GM12878 (cell line): ENCODE measurements at regions of chr2 and their contacts with region 1.

Region 1: GRCh38 chr2:136059036-136059472 is 58.9 kb downstream of the CXCR4 start:
- DNase-seq: peak; percentile 63
- ATAC-seq: peak; percentile 63
- H3K4me3 ChIP-seq: no peak overlapping the region
- H3K27ac ChIP-seq: peak overlapping the region; percentile 40; the same call in 1 of the 2 replicates
- H3K4me1 ChIP-seq: peaks cover 51% of the 10 kb centered on the region
- H3K27me3 ChIP-seq: no peaks in the 10 kb centered on the region
- CTCF ChIP-seq: no peak
- EP300 ChIP-seq: peak in 1 of 2 experiments; percentile 45; a peak in 1 of 4 replicates
- POLR2A ChIP-seq: no peak
- RAD21 ChIP-seq: peak; percentile 15; the same call in 1 of the 2 replicates

Region 2: DNA sequence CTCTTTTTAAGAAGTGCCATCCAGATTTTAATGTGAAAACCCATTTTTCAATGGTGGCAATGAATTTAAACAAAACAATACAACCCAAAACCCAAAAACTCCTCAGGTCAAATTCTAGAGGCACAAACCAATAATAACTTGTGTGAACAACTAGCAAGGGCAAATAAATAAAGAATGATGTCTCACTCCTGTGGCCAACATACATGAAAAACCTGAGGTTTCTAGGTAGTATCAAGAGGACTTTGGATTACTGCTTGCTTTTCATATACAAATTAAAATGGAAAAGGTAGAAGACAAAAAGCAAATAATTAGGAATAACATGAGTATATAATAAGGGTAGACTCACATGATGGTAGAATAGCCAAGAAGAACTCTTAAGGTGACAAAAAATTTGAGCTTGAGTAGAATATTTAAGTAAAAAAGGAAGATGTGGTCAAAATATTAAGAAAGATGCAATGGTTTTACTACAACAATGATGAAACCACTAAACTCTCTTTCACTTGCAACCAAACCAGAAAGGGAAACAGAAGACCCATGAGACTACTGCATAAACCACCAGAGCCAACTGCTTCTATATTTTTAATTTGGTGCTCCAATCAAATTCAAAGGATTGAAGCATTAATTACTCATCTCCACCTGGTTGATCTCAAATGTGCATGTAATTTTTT is 127.1 kb before region 1 on chr2:
- CTCF ChIA-PET with region 1: interaction called, 5 read pairs
- POLR2A ChIA-PET with region 1: interaction called, 3 read pairs
- RAD21 ChIA-PET with region 1: interaction called, 12 read pairs
- SMC1A ChIA-PET with region 1: interaction called, 14 read pairs
- in situ Hi-C with region 1: no loop called
- intact Hi-C with region 1: no loop called
- DNase-seq: no peak
- ATAC-seq: peak; percentile 95
- H3K4me3 ChIP-seq: no peak overlapping the region
- H3K27ac ChIP-seq: no peak overlapping the region
- H3K4me1 ChIP-seq: peaks cover 6% of the 10 kb centered on the region
- H3K27me3 ChIP-seq: no peaks in the 10 kb centered on the region
- CTCF ChIP-seq: no peak
- EP300 ChIP-seq: peak; percentile 45 to 53; a peak in 2 of 4 replicates
- POLR2A ChIP-seq: no peak
- RAD21 ChIP-seq: no peak

Region 3: DNA sequence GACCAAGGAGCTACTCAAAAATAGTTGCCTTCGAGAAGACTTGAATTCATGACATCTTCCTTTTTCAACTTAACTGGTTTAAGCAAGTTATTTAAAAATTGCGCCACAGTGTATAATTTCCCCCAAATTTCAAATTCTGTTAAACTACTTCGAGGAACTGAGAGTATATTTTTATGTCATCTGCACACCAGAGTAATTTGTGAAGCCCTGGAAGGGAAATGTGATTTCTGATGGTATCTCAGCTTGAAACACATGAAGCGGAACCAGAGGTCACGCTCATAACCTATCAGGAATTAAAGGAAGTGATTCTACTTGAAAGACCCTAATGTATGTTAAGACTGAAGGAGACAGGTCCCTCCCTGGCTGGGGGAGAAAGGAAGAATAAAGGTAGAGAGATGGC is 39.7 kb before region 1 on chr2:
- CTCF ChIA-PET with region 1: interaction called, 33 read pairs
- POLR2A ChIA-PET with region 1: interaction called, 80 read pairs
- RAD21 ChIA-PET with region 1: interaction called, 348 read pairs
- SMC1A ChIA-PET with region 1: interaction called, 961 read pairs
- in situ Hi-C with region 1: no loop called
- intact Hi-C with region 1: no loop called
- DNase-seq: peak; percentile 40
- ATAC-seq: peak; percentile 78
- H3K4me3 ChIP-seq: no peak overlapping the region
- H3K27ac ChIP-seq: no peak overlapping the region
- H3K4me1 ChIP-seq: peaks cover 8% of the 10 kb centered on the region
- H3K27me3 ChIP-seq: no peaks in the 10 kb centered on the region
- CTCF ChIP-seq: no peak
- EP300 ChIP-seq: peak; percentile 78 to 87; a peak in 2 of 4 replicates
- POLR2A ChIP-seq: no peak
- RAD21 ChIP-seq: 0 out of 2 replicates have a peak, but pooled peaks have one; percentile 6

Region 4: DNA sequence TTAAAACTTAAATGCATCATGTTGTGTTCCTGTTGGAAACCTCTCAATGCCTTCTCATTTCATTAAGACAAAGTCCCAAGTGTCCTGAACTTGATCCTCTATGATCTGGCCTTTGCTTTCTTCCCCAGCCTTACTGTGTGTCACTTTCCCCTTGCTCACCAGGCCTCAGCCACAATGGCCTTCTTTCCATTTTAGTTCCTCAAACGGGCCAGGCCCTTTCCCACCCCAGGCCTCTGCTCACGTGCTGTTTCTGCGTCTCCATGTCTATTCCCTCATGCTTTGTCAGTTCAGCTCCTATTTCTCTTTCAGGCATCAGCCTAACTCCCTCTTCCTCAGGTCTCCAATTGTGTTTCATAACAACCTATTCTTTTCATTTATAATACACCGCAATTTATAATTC is 39.4 kb after region 1 on chr2:
- CTCF ChIA-PET with region 1: interaction called, 3 read pairs
- POLR2A ChIA-PET with region 1: interaction called, 3 read pairs
- RAD21 ChIA-PET with region 1: interaction called, 3 read pairs
- SMC1A ChIA-PET with region 1: interaction called, 20 read pairs
- in situ Hi-C with region 1: no loop called
- intact Hi-C with region 1: no loop called
- DNase-seq: no peak
- ATAC-seq: no peak
- H3K4me3 ChIP-seq: no peak overlapping the region
- H3K27ac ChIP-seq: no peak overlapping the region
- H3K4me1 ChIP-seq: no peaks in the 10 kb centered on the region
- H3K27me3 ChIP-seq: no peaks in the 10 kb centered on the region
- CTCF ChIP-seq: no peak
- EP300 ChIP-seq: no peak
- POLR2A ChIP-seq: no peak
- RAD21 ChIP-seq: no peak

Region 5: GRCh38 chr2:136135921-136136906 is 77.2 kb after region 1 on chr2:
- CTCF ChIA-PET with region 1: interaction called, 6 read pairs
- POLR2A ChIA-PET with region 1: interaction called, 9 read pairs
- RAD21 ChIA-PET with region 1: interaction called, 301 read pairs
- SMC1A ChIA-PET with region 1: interaction called, 234 read pairs
- in situ Hi-C with region 1: no loop called
- intact Hi-C with region 1: loop called (anchors 1 kb)
- DNase-seq: no peak
- ATAC-seq: peak; percentile 64
- H3K4me3 ChIP-seq: no peak overlapping the region
- H3K27ac ChIP-seq: no peak overlapping the region
- H3K4me1 ChIP-seq: peaks cover 42% of the 10 kb centered on the region
- H3K27me3 ChIP-seq: peaks cover 0 to 21% of the 10 kb centered on the region in 2 experiments; a peak in 2 of 4 replicates
- CTCF ChIP-seq: no peak
- EP300 ChIP-seq: peak; percentile 97; a peak in 3 of 4 replicates
- POLR2A ChIP-seq: no peak
- RAD21 ChIP-seq: no peak

Region 6: GRCh38 chr2:136151021-136151971 is 92.2 kb after region 1 on chr2:
- CTCF ChIA-PET with region 1: no interaction called
- POLR2A ChIA-PET with region 1: no interaction called
- RAD21 ChIA-PET with region 1: no interaction called
- SMC1A ChIA-PET with region 1: no interaction called
- in situ Hi-C with region 1: no loop called
- intact Hi-C with region 1: no loop called
- DNase-seq: no peak
- ATAC-seq: peak; percentile 68
- H3K4me3 ChIP-seq: no peak overlapping the region
- H3K27ac ChIP-seq: no peak overlapping the region
- H3K4me1 ChIP-seq: no peaks in the 10 kb centered on the region
- H3K27me3 ChIP-seq: peaks cover 0 to 2% of the 10 kb centered on the region in 2 experiments; a peak in 3 of 4 replicates
- CTCF ChIP-seq: no peak
- EP300 ChIP-seq: no peak
- POLR2A ChIP-seq: no peak
- RAD21 ChIP-seq: no peak

Region 7: GRCh38 chr2:136246086-136246669 is 187.1 kb after region 1 on chr2:
- CTCF ChIA-PET with region 1: no interaction called
- POLR2A ChIA-PET with region 1: no interaction called
- RAD21 ChIA-PET with region 1: interaction called, 57 read pairs
- SMC1A ChIA-PET with region 1: interaction called, 4 read pairs
- in situ Hi-C with region 1: no loop called
- intact Hi-C with region 1: loop called (anchors 10 kb)
- DNase-seq: peak; percentile 60
- ATAC-seq: peak; percentile 96
- H3K4me3 ChIP-seq: no peak overlapping the region
- H3K27ac ChIP-seq: no peak overlapping the region; the same call in 1 of the 2 replicates
- H3K4me1 ChIP-seq: peaks cover 3% of the 10 kb centered on the region; the same call in 1 of the 2 replicates
- H3K27me3 ChIP-seq: 0 out of 4 replicates have a peak, but pooled peaks cover 0 to 2% of the 10 kb centered on the region in 2 experiments
- CTCF ChIP-seq: no peak
- EP300 ChIP-seq: peak; percentile 78 to 87; a peak in 3 of 4 replicates
- POLR2A ChIP-seq: no peak
- RAD21 ChIP-seq: no peak

Region 8: GRCh38 chr2:136384531-136385303 is 325.7 kb after region 1 on chr2:
- CTCF ChIA-PET with region 1: interaction called, 12 read pairs
- POLR2A ChIA-PET with region 1: interaction called, 5 read pairs
- RAD21 ChIA-PET with region 1: interaction called, 244 read pairs
- SMC1A ChIA-PET with region 1: interaction called, 272 read pairs
- in situ Hi-C with region 1: loop called (anchors 5 kb)
- intact Hi-C with region 1: loop called (anchors 2 kb)
- DNase-seq: no peak
- ATAC-seq: peak; percentile 68
- H3K4me3 ChIP-seq: no peak overlapping the region
- H3K27ac ChIP-seq: no peak overlapping the region
- H3K4me1 ChIP-seq: peaks cover 21% of the 10 kb centered on the region
- H3K27me3 ChIP-seq: no peaks in the 10 kb centered on the region
- CTCF ChIP-seq: peak; percentile 83 to 92 (median 87)
- EP300 ChIP-seq: peak; percentile 28 to 37; a peak in 1 of 4 replicates
- POLR2A ChIP-seq: no peak
- RAD21 ChIP-seq: peak; percentile 91